ENCODE measurements at regions of chr22 and their contacts with region 1.

Region 1: GRCh38 chr22:23385291-23386244 is 194.5 kb downstream of the IGLL1 start:
- DNase-seq: no peak
- H3K4me3 ChIP-seq: no peak overlapping the region
- H3K27me3 ChIP-seq: peaks cover 2% of the 10 kb centered on the region; the same call in 1 of the 2 replicates
- CTCF ChIP-seq: peak; percentile 99

Region 2: DNA sequence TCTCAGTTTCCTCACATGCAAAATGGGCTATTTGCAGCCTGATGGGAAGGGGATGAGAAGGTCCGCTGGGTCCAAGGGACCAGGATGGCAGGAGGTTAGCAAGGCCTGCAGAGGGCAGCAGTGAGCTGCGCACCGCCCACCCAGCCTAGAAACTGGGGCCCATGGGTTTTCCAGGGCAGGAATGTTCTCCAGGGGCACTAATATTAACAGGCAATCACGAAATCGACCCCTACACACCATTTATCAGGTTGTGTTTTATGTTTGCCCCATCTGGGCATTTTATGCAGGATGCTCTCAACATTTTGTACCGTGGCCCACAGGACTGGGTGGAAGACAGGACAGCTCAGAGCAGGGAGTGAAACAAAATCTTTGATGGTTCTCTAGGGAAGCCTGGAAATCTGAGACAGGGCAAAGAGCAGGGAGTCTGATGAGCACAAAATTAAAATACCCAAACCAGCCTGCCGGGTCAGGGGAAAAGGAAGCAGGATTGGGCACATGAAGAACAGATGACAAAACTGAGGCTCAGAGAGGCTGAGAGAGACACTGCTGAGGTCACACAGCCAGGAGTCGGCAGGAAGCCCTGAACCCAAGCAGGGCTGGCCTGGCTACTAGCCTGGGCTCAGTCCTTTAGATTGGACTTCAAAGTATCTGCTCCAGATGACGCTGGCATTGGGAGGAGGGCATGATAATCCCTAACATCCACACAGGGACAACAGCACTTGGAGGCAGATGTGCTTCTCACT is 206.9 kb before region 1 on chr22:
- CTCF ChIA-PET with region 1: interaction called, 15 read pairs
- POLR2A ChIA-PET with region 1: no interaction called
- DNase-seq: no peak
- H3K4me3 ChIP-seq: no peak overlapping the region
- H3K27me3 ChIP-seq: no peaks in the 10 kb centered on the region
- CTCF ChIP-seq: peak; percentile 99

Region 3: DNA sequence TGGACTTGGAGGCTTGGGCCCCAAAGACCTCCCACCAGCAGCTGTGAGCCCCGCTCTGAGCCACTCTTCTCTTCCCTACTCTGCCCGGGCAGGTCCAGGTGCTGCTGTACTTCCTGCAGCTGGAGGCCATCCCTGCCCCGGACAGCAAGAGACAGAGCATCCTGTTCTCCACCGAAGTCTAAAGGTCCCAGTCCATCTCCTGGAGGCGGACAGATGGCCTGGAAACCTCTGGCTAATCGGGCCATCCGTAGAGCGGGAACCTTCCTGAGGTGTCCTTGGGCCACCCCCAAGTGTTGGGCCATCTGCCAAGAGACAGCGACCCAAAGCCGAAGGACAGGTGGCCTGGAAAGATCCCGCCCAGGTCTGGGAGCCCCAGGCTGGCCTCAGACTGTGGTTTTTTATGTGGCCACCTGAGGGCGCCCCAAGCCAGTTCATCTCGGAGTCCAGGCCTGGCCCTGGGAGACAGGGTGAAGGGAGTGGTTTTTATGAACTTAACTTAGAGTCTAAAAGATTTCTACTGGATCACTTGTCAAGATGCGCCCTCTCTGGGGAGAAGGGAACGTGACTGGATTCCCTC is 70.1 kb before region 1 on chr22:
- CTCF ChIA-PET with region 1: interaction called, 23 read pairs
- POLR2A ChIA-PET with region 1: no interaction called
- DNase-seq: no peak
- H3K4me3 ChIP-seq: no peak overlapping the region
- H3K27me3 ChIP-seq: no peaks in the 10 kb centered on the region
- CTCF ChIP-seq: peak; percentile 69

Region 4: GRCh38 chr22:23325183-23325582 is 60.4 kb before region 1 on chr22:
- CTCF ChIA-PET with region 1: interaction called, 10 read pairs
- POLR2A ChIA-PET with region 1: no interaction called
- DNase-seq: no peak
- H3K4me3 ChIP-seq: no peak overlapping the region
- H3K27me3 ChIP-seq: no peaks in the 10 kb centered on the region
- CTCF ChIP-seq: no peak

Region 5: DNA sequence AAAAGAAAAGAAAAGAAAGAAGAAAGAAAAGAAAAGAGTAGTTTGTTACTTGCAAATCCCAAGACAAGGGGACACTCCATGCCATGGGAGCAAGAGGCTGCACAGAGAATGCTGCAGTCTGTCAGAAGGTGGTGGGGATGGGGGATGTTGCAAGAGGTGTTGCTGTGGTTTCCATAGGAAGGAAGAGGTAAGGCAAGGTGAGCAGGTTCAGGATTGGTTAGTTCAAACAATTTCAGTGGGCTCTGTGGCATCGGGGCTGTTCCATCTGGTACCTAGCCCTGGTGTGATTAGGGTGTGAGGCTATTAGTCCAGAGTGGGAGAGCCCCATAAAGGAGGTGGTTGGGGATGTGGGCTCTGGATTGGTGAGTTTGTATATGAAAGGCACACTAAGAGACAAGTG is 32.6 kb before region 1 on chr22:
- CTCF ChIA-PET with region 1: interaction called, 10 read pairs
- POLR2A ChIA-PET with region 1: no interaction called
- DNase-seq: no peak
- H3K4me3 ChIP-seq: no peak overlapping the region
- H3K27me3 ChIP-seq: peaks cover 13% of the 10 kb centered on the region
- CTCF ChIP-seq: no peak

Region 6: GRCh38 chr22:23368656-23369417 is 16.7 kb before region 1 on chr22:
- CTCF ChIA-PET with region 1: interaction called, 42 read pairs
- POLR2A ChIA-PET with region 1: no interaction called
- DNase-seq: no peak
- H3K4me3 ChIP-seq: no peak overlapping the region
- H3K27me3 ChIP-seq: peaks cover 17% of the 10 kb centered on the region
- CTCF ChIP-seq: no peak

Region 7: GRCh38 chr22:23395530-23396361 is 10.2 kb after region 1 on chr22:
- CTCF ChIA-PET with region 1: interaction called, 15 read pairs
- POLR2A ChIA-PET with region 1: no interaction called
- DNase-seq: no peak
- H3K4me3 ChIP-seq: no peak overlapping the region
- H3K27me3 ChIP-seq: no peaks in the 10 kb centered on the region
- CTCF ChIP-seq: no peak